ENCODE measurements at regions of chr11 and their contacts with region 1.

Region 1: GRCh38 chr11:18710545-18710944 is 12.0 kb downstream of the TMEM86A start:
- H3K4me3 ChIP-seq: no peak overlapping the region
- H3K27ac ChIP-seq: no peak overlapping the region
- H3K4me1 ChIP-seq: no peaks in the 10 kb centered on the region
- CTCF ChIP-seq: no peak

Region 2: GRCh38 chr11:18419040-18419439 is 291.5 kb before region 1 on chr11:
- CTCF ChIA-PET with region 1: no interaction called
- POLR2A ChIA-PET with region 1: no interaction called
- H3K4me3 ChIP-seq: no peak overlapping the region
- H3K27ac ChIP-seq: no peak overlapping the region
- H3K4me1 ChIP-seq: no peaks in the 10 kb centered on the region
- CTCF ChIP-seq: no peak

Region 3: DNA sequence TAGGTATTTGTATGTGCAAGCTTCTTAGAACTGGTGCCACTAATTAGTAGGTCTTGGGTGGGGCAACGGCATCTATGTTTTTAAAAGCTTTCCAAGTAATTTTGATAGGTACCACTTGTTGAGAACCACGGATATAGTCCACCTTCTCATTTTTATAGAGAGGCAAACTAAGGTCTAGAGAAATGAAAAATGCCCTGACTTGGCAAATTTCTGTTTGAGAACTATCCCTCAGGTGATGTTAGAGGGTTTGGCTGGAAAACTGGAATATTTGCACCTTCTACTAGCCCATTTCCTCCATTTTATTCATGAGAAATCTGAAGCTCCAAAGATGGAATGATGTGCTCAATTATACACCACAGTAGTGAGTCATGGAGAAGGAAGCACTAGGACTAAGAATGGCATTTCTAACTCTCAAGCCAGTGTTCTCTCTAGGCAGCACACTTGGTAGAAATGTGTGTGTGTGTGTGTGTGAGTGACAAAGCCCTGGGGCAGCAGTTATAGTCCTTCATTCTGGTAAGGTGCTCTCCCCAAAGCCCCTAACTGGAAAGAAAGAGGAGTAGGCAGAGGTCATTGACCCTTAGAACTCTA is 13.8 kb before region 1 on chr11:
- CTCF ChIA-PET with region 1: no interaction called
- POLR2A ChIA-PET with region 1: no interaction called
- H3K4me3 ChIP-seq: no peak overlapping the region
- H3K27ac ChIP-seq: no peak overlapping the region
- H3K4me1 ChIP-seq: no peaks in the 10 kb centered on the region
- CTCF ChIP-seq: no peak

Region 4: DNA sequence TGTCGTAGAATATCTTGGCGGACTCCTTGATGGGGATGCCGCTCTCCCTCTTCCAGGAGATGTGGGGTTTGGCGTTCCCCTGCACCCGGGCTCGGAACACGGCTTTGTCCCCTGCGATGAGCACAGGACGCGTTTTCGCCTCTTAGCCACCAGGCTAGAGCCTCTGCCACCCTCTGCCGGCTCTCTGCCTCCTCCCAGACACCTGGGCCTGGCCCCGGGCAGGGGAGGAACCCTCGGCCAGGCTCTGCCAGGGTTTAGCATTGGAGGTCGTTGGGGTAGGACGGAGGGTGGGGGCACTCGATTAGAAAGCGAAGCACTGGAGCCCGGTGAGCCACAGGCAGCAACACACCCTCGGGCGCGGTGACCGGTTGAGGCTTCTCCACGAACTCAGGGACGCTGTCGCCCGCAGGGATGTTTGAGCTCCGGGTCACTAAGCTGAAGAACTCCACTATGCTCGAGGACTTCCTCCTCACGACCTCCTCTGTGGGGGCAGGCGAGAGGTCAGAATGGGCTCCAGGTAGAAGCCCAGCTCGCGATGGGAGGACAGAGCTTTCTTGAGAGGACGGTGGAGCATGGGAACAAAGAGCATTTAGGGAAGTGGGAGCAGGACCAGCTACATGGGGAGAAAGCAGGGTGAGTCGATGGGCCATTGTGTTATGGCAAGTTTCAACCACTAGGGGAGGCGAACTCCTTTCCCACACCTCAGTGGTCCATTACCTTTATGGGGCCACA is 11.2 kb after region 1 on chr11:
- CTCF ChIA-PET with region 1: interaction called, 16 read pairs
- POLR2A ChIA-PET with region 1: no interaction called
- H3K4me3 ChIP-seq: peak overlapping the region; percentile 15; the same call in 1 of the 2 replicates
- H3K27ac ChIP-seq: no peak overlapping the region
- H3K4me1 ChIP-seq: no peaks in the 10 kb centered on the region
- CTCF ChIP-seq: peak; percentile 33; the same call in 1 of the 2 replicates

Measured in HEK293 (cell line).